Activated CD4-positive, alpha-beta memory T cell treated with anti-CD3 and anti-CD28 coated beads for 36 hours (primary cell): ENCODE measurements at regions of chr14 and their contacts with region 1.

Region 1: GRCh38 chr14:61662437-61663311 is 32.6 kb upstream of the HIF1A start:
- DNase-seq: peak; percentile 73
- H3K4me3 Mint-ChIP-seq: peak overlapping the region; percentile 60
- H3K27ac Mint-ChIP-seq: peak overlapping the region; percentile 98
- H3K4me1 Mint-ChIP-seq: peaks cover 66% of the 10 kb centered on the region
- H3K27me3 Mint-ChIP-seq: no peaks in the 10 kb centered on the region

Region 2: GRCh38 chr14:61326847-61327246 is 335.8 kb before region 1 on chr14:
- CTCF ChIA-PET with region 1: no interaction called
- POLR2A ChIA-PET with region 1: no interaction called
- intact Hi-C with region 1: loop called (anchors 1 kb)
- DNase-seq: no peak
- H3K4me3 Mint-ChIP-seq: peak overlapping the region; percentile 99
- H3K27ac Mint-ChIP-seq: peak overlapping the region; percentile 93
- H3K4me1 Mint-ChIP-seq: peaks cover 64% of the 10 kb centered on the region
- H3K27me3 Mint-ChIP-seq: no peaks in the 10 kb centered on the region

Region 3: DNA sequence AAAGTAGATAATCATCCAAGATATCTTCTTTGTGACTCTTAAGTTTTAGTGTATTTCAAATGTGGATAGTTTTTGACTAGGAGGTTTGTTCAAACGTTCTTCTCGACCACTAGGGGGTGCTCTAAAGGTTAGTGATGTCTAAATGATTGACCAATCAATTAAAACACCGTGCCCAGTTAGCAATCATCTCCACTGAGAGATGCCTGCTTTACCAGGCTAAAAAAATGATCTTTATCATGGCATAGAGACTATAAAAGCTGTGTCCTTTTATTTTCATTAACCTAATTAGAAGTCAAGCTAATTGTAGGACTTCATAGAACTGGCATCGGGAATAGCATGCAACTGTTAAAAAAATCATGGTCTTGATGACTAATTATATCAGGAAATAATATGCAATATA is 187.4 kb before region 1 on chr14:
- CTCF ChIA-PET with region 1: interaction called, 3 read pairs
- POLR2A ChIA-PET with region 1: interaction called, 7 read pairs
- intact Hi-C with region 1: loop called (anchors 1 kb)
- DNase-seq: no peak
- H3K4me3 Mint-ChIP-seq: peak overlapping the region; percentile 42
- H3K27ac Mint-ChIP-seq: peak overlapping the region; percentile 100
- H3K4me1 Mint-ChIP-seq: peaks cover 93% of the 10 kb centered on the region
- H3K27me3 Mint-ChIP-seq: peaks cover 1% of the 10 kb centered on the region

Region 4: GRCh38 chr14:61525293-61526011 is 137.2 kb before region 1 on chr14:
- CTCF ChIA-PET with region 1: interaction called, 6 read pairs
- POLR2A ChIA-PET with region 1: interaction called, 17 read pairs
- intact Hi-C with region 1: loop called (anchors 1 kb)
- DNase-seq: peak; percentile 92
- H3K4me3 Mint-ChIP-seq: peak overlapping the region; percentile 63
- H3K27ac Mint-ChIP-seq: peak overlapping the region; percentile 91
- H3K4me1 Mint-ChIP-seq: peaks cover 88% of the 10 kb centered on the region
- H3K27me3 Mint-ChIP-seq: no peaks in the 10 kb centered on the region

Region 5: DNA sequence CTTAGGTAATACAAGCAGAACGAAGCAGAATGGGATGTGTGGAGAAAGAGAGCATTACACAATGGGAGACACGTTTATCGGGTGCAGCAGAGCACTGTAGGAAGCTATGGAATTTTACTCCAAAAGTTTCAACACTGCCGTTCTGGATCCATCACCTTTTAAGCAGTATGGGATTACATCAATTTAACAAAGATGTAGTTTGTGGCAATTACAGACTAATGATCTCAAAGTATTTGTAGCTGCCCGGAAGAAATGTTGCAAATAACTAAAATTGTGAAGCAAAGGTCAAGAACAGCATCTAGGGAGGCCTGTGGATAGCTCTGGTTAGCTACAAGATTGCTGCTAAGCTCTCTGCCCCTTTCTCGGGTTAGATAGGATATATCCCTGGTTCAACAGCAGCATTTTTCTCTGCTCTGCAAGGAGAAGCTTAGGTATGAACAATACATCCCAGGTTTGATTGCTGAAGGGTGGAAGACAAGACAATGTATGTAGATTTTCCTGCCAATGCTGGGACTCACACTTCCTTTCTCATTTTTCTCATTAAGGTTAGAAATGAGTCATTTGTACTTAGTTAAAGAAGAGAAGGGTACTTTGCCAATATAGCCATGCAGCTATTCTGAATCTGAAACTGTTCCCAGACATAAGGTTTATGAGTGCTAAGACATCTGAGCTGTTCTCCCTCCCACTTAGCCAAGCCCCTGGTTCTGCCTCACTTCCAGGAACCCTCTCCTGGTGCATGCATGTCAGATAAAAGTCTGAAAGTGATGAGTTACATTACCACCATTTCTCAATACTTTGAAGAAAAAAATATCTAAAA is 42.3 kb before region 1 on chr14:
- CTCF ChIA-PET with region 1: interaction called, 3 read pairs
- POLR2A ChIA-PET with region 1: interaction called, 17 read pairs
- intact Hi-C with region 1: loop called (anchors 1 kb)
- DNase-seq: peak; percentile 79
- H3K4me3 Mint-ChIP-seq: no peak overlapping the region
- H3K27ac Mint-ChIP-seq: peak overlapping the region; percentile 67
- H3K4me1 Mint-ChIP-seq: peaks cover 65% of the 10 kb centered on the region
- H3K27me3 Mint-ChIP-seq: no peaks in the 10 kb centered on the region